ENCODE measurements at regions of chr6 and their contacts with region 1.

Region 1: DNA sequence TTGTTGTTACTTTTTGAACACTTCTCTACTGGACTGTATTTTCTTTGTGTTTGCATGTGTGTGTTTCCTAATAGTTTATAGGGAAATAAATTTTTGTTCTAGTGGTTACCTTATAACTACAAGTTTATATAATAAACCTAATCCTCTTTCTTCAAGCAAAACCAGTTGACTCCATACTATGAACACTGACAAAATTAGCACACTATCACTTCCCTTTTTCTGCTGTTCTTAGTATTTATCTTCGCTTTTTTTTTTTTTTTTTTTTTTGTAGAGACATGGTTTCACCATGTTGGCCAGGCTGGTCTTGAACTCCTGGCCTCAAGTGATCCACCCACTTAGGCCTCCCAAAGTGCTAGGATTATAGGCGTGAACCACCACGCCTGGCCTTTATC is 25.0 kb upstream of the C6orf62 start:
- DNase-seq: peak in 2 of 3 donors; percentile 37 to 44
- H3K4me3 ChIP-seq: no peak overlapping the region
- H3K27ac ChIP-seq: no peak overlapping the region
- H3K4me1 ChIP-seq: peaks cover 0 to 7% (median 0%) of the 10 kb centered on the region in 4 experiments
- H3K27me3 ChIP-seq: no peaks in the 10 kb centered on the region

Region 2: DNA sequence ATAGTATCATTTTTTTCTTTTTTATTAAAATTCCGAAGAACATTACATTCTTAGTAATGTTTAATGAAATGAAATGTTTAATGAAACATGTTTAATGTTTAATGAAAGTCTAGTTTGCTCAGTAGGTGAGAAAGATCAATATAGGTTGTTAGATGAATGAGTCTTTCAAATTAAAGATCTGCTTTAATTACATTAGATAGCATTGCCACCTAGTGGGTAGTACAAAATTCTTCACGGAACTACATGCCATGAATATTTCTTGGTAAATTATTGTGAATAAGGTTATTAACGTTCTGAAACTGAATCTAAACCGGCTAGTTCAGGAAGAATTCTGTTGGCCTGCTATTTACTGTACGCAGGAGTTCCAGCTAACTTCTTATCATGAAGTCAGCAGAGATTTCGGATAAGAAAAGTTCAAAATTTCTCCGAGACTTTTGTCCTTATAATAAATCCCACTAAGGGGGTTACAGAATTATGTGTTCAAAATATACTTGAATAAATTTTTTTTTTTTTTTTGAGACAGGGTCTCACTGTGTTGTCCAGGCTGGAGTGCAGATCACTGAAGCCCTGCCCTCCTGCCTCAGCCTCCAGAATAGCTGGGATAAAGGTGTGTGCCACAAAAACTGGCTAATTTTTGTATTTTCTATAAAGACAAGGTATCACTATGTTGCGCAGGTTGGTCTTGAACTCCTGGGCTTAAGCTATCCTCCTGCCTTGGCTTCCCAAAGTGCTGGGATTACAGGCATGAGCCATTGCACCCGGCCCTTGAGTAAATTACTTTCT is 22.9 kb after region 1 on chr6:
- CTCF ChIA-PET with region 1: interaction called, 10 read pairs
- POLR2A ChIA-PET with region 1: no interaction called
- DNase-seq: peak; percentile 50 to 65 (median 63)
- H3K4me3 ChIP-seq: no peak overlapping the region
- H3K27ac ChIP-seq: no peak overlapping the region
- H3K4me1 ChIP-seq: no peaks in the 10 kb centered on the region
- H3K27me3 ChIP-seq: no peaks in the 10 kb centered on the region

Measured in common myeloid progenitor, CD34-positive (primary cell).